H1 (cell line): ENCODE measurements at regions of chr2 and their contacts with region 1.

Region 1: DNA sequence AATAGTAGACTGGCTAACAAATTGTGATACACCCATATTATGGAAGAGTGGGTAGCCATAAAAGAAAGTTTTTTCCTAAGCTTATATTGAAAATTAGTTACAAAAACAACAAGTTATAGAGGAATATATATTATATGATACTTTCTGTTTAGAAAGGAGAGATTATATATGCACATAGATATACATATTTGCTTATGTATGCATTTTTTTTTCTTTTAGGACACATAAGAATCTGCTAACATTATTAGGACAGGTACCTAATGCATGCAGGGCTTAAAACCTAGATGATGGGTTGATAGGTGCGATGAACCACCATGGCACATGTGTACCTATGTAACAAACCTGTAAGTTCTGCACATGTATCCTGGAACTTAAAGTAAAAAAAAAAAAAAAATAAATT is 179.6 kb upstream of the KCNJ3 start:
- DNase-seq: no peak
- H3K4me3 ChIP-seq: no peak overlapping the region
- H3K27ac ChIP-seq: no peak overlapping the region
- H3K4me1 ChIP-seq: peaks cover 0 to 5% (median 0%) of the 10 kb centered on the region in 4 experiments; a peak in 2 of 7 replicates
- H3K27me3 ChIP-seq: no peaks in the 10 kb centered on the region
- CTCF ChIP-seq: no peak
- EP300 ChIP-seq: no peak
- POLR2A ChIP-seq: no peak
- RAD21 ChIP-seq: no peak

Region 2: DNA sequence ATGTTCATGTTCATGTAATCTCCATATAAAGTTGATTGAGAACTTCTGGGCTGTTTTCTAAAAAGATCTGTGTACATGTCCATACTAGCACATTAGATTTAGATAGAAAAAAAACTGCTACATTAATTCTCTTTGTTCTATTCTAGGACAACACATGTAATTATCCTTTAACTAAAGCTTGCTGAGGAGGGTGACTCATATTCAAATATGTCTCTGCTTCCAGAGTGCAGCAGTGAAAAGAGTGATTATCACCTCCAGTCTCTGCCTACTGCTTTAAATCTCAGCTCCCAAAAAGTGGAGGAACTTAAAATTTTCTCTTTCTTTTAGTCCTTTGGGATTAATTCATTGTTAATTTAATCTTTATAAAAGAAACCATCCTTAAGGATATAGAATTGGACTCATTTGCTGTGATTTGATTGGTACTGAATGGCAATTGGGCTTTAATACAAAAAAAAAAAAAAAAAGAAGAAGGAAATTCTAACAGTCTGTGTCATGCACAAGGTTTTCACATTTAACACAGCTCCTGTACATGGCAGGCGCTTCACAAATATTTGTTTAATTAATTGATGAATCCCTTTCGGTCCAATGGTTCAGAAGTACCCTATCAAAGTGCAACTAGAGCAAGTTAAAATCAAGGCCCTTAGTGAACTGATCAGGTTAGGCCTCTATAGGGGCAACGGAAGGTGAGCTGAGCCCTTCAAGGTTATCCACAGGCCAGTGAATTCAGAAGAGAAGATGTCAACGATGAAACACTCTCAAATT is 34.4 kb before region 1 on chr2:
- CTCF ChIA-PET with region 1: no interaction called
- POLR2A ChIA-PET with region 1: no interaction called
- DNase-seq: no peak
- H3K4me3 ChIP-seq: no peak overlapping the region
- H3K27ac ChIP-seq: no peak overlapping the region
- H3K4me1 ChIP-seq: peaks cover 0 to 5% (median 2%) of the 10 kb centered on the region in 4 experiments; a peak in 2 of 7 replicates
- H3K27me3 ChIP-seq: no peaks in the 10 kb centered on the region
- CTCF ChIP-seq: no peak
- EP300 ChIP-seq: no peak
- POLR2A ChIP-seq: no peak
- RAD21 ChIP-seq: no peak

Region 3: DNA sequence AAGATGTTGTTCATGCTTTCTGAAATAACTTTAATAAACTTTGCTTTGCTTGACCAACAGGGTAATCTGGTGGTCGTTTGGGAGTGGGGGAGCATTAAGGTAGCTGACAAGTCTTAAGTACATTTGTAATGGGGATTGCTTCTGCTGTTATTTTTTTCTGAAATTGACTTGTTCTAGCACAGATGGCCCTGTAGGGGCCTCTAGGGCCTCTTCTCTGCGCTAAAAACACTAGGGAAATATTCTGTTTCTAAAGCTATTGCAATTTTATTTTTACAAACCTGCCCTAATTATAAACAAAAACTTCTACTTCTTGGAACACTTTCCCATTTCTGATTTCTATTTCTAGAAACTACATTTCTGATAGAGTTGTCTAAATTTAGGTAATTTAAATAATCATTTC is 11.7 kb before region 1 on chr2:
- CTCF ChIA-PET with region 1: interaction called, 11 read pairs
- POLR2A ChIA-PET with region 1: interaction called, 3 read pairs
- DNase-seq: no peak
- H3K4me3 ChIP-seq: no peak overlapping the region
- H3K27ac ChIP-seq: no peak overlapping the region
- H3K4me1 ChIP-seq: no peaks in the 10 kb centered on the region
- H3K27me3 ChIP-seq: no peaks in the 10 kb centered on the region
- CTCF ChIP-seq: peak in 2 of 3 experiments; percentile 15 to 22; a peak in 2 of 4 replicates
- EP300 ChIP-seq: no peak
- POLR2A ChIP-seq: no peak
- RAD21 ChIP-seq: peak; percentile 15 to 47; a peak in 2 of 4 replicates